ENCODE measurements at regions of chr6 and their contacts with region 1.

Region 1: GRCh38 chr6:135183532-135184440 is 2.7 kb downstream of the MYB start:
- DNase-seq: peak; percentile 77
- H3K4me3 Mint-ChIP-seq: peak overlapping the region; percentile 97
- H3K27ac Mint-ChIP-seq: peak overlapping the region; percentile 81
- H3K4me1 Mint-ChIP-seq: peaks cover 47% of the 10 kb centered on the region
- H3K27me3 Mint-ChIP-seq: no peaks in the 10 kb centered on the region

Region 2: GRCh38 chr6:133606852-133607251 is 1576.9 kb before region 1 on chr6:
- intact Hi-C with region 1: no loop called
- DNase-seq: no peak
- H3K4me3 Mint-ChIP-seq: no peak overlapping the region
- H3K27ac Mint-ChIP-seq: no peak overlapping the region
- H3K4me1 Mint-ChIP-seq: no peaks in the 10 kb centered on the region
- H3K27me3 Mint-ChIP-seq: no peaks in the 10 kb centered on the region

Region 3: DNA sequence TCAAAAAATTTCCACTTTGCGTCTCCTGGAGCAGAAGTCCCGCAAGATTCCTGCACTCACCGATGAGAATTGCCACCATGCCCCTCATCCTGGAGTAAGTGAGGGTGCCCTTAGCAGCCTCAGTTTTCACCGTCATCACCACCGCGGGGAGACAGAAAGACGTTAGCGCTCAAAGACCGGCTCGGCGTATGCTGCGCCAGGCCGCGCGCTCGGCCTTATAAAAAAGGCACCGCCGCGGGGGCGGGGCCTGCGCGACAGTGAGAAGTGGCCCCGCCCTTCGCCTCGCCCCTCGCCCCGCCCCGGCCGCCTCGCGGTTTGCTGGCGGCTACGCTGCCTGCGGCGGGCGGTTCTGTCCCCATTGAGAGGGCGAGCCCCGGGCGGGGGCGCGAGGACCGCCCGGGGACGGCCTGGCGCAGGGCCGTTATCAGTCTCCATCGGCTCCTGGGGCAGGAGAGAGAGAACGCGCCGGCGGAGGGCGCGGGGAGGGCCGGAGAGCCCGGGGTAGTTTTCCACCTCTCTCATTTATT is 1009.1 kb before region 1 on chr6:
- intact Hi-C with region 1: loop called (anchors 10 kb)
- DNase-seq: peak; percentile 89
- H3K4me3 Mint-ChIP-seq: peak overlapping the region; percentile 96
- H3K27ac Mint-ChIP-seq: peak overlapping the region; percentile 98
- H3K4me1 Mint-ChIP-seq: peaks cover 78% of the 10 kb centered on the region
- H3K27me3 Mint-ChIP-seq: no peaks in the 10 kb centered on the region

Region 4: DNA sequence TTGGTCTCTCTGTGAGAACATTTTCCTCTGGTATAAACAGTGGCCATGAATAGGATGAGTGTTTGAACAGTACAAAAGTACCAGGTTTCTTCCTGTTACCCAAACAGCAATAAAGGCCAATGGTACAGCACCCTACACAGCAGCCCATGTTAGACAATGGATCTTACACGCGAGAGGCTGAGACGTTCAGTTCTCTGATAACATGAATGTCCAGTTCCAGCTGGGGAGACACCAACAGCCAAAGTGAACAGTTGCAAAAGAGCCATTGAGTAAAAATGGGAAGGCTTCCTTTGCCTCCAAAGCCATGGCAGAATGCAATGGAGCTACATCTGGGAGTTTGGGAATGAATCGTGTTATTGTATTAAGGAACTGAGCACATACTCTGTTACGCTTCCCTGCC is 619.1 kb before region 1 on chr6:
- intact Hi-C with region 1: no loop called
- DNase-seq: no peak
- H3K4me3 Mint-ChIP-seq: no peak overlapping the region
- H3K27ac Mint-ChIP-seq: no peak overlapping the region
- H3K4me1 Mint-ChIP-seq: peaks cover 20% of the 10 kb centered on the region
- H3K27me3 Mint-ChIP-seq: peaks cover 2% of the 10 kb centered on the region

Region 5: GRCh38 chr6:134979142-134979541 is 204.6 kb before region 1 on chr6:
- intact Hi-C with region 1: loop called (anchors 1 kb)
- DNase-seq: peak; percentile 52
- H3K4me3 Mint-ChIP-seq: peak overlapping the region; percentile 43
- H3K27ac Mint-ChIP-seq: peak overlapping the region; percentile 65
- H3K4me1 Mint-ChIP-seq: peaks cover 58% of the 10 kb centered on the region
- H3K27me3 Mint-ChIP-seq: no peaks in the 10 kb centered on the region

Region 6: DNA sequence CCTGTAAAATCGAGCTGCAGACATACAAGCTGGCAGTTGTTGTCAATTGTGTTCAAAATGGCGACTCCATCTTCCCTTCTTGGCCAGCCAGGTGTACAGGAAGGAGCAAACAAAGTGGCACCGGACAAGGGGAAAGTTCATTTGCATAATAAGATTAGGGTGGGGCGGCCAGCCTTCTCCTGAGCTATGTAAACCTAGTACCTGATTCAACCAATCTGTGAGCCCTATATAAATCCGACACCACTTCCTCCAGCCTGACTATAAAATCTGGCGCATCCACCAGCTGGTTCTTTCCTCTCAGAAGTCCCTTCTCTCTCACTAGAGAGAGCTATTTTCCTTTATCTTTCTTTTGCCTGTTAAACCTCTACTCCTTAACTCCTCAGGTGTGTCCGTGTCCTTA is 121.1 kb before region 1 on chr6:
- intact Hi-C with region 1: no loop called
- DNase-seq: no peak
- H3K4me3 Mint-ChIP-seq: no peak overlapping the region
- H3K27ac Mint-ChIP-seq: no peak overlapping the region
- H3K4me1 Mint-ChIP-seq: peaks cover 12% of the 10 kb centered on the region
- H3K27me3 Mint-ChIP-seq: no peaks in the 10 kb centered on the region

Region 7: DNA sequence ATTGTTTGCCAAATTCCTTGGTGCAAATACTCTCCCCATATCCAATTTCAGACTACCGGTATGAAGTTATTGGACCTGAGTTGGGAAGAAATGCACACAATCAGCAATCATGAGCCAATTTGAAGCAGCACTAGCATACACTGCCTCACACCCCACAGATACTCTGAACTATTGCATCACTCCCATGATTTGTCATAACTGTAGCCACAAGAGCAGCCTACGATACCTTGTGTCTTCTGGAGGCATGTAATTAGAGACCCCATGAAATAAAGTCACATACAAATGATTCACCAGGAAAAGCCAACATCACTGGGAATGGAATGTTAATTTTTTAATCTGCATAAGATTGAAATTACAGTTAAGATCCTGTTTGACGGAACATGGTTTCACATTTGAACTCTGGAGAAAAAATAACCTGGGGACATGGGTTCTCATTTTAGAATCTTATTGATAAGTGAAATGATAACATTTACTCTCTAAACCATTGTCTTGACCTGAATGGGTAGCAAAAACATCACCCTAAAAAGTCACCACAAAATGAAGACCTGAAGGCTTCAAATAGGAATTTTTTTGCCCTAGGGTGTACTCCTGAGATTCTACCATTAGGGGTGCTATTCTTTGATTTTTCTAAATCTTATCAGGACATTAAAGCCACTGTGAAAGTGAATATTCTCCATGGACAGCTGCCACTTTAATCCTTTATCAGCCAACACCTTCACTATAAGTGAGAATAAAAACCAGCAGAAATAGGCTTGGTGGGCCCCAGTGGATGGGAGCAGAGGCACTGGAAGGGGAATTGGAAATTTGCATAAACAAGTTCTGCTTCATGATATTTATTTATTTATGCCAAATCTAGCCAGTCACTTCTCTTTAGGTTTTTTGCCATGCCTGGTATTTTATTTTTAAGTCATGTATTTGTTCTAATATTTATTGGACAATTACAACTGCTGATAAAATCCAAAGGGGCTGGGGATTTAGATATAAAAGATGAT is 94.7 kb before region 1 on chr6:
- intact Hi-C with region 1: loop called (anchors 1 kb)
- DNase-seq: peak; percentile 58
- H3K4me3 Mint-ChIP-seq: peak overlapping the region; percentile 57
- H3K27ac Mint-ChIP-seq: peak overlapping the region; percentile 93
- H3K4me1 Mint-ChIP-seq: peaks cover 89% of the 10 kb centered on the region
- H3K27me3 Mint-ChIP-seq: no peaks in the 10 kb centered on the region

Region 8: DNA sequence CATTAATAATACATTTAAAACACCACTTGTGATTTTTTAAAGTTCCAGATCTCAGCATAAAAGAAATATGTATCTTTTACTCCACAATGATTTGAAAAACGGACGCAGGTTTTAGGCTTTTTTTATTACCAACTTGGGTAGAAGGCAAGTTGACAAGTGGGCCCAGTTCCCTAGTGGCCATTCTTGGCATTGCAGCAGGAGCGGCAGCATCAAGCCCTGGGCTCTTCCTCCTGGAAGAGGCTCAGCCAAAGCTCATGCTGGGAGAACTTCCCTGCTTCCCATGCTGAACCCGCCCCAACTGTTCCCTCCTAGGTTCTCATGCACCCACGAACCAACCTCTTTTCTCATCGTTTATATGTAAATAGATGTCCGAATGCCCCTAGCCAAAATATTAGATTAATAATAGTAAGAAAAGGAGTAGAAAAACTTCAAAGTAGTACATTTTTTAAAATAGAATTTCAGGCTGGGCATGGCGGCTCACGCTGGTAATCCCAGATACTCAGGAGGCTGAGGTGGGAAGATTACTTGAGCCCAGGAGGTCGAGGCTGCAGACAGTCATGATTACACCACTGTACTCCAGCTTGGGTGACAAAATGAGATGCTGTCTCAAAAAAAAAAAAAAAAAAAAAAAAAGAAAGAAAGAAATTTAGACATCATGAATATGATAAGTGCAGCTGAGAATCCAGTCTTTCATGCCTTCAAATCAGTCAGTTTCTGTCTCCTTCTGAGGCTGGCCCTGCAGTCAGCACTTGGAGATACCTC is 20.9 kb before region 1 on chr6:
- intact Hi-C with region 1: loop called (anchors 1 kb)
- DNase-seq: no peak
- H3K4me3 Mint-ChIP-seq: peak overlapping the region; percentile 53
- H3K27ac Mint-ChIP-seq: peak overlapping the region; percentile 87
- H3K4me1 Mint-ChIP-seq: peaks cover 83% of the 10 kb centered on the region
- H3K27me3 Mint-ChIP-seq: no peaks in the 10 kb centered on the region

Region 9: GRCh38 chr6:135423649-135424128 is 239.9 kb after region 1 on chr6:
- intact Hi-C with region 1: loop called (anchors 2 kb)
- DNase-seq: no peak
- H3K4me3 Mint-ChIP-seq: no peak overlapping the region
- H3K27ac Mint-ChIP-seq: peak overlapping the region; percentile 16
- H3K4me1 Mint-ChIP-seq: peaks cover 11% of the 10 kb centered on the region
- H3K27me3 Mint-ChIP-seq: no peaks in the 10 kb centered on the region

Measured in activated T-helper 1 cell treated with anti-CD3 and anti-CD28 coated beads, Interleukin-12 subunit alpha, Interleukin-12 subunit beta, Interleukin-2, Interleukin-4 antibody, amounts not matched to agents 30 ng/mL and 10 ng/mL and 1 ng/mL, durations not matched to agents 14 hours and 24 hours and 36 hours (primary cell).